GM12878 (cell line): ENCODE measurements at regions of chr2 and their contacts with region 1.

Region 1: GRCh38 chr2:135709992-135710391 is 31.7 kb upstream of the UBXN4 start:
- DNase-seq: no peak
- ATAC-seq: peak; percentile 89
- H3K4me3 ChIP-seq: no peak overlapping the region
- H3K27ac ChIP-seq: no peak overlapping the region
- H3K4me1 ChIP-seq: no peaks in the 10 kb centered on the region
- H3K27me3 ChIP-seq: no peaks in the 10 kb centered on the region
- CTCF ChIP-seq: peak; percentile 87 to 89 (median 89)
- EP300 ChIP-seq: no peak
- POLR2A ChIP-seq: no peak
- RAD21 ChIP-seq: peak; percentile 95

Region 2: DNA sequence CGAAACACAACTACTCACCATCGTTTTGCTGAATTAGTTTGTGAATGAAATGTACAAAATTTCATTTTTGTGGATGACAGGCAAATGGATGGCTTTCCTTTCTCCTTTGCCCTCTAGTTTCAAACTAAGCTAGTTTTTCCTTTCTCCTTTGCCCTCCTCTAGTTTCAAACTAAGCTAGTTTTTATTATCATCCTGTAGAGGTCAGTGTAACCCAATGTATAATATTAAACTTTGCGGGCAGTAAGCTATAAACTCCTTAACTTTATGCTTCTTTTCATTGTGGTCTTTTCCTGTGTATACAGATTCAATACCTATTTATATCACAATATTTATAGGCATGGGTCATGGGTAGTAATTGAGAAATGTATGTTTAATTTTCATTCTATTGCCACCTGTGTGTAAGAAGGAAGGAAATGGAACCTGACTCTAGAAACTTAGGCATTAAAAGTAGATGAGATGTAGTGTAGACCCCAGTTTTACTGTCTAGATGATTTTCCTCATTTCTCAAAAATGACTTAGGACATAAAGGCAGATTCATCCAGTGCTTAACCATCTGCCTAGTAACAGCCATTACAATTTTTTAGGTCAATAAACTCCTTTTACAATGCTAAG is 720.9 kb before region 1 on chr2:
- CTCF ChIA-PET with region 1: interaction called, 54 read pairs
- POLR2A ChIA-PET with region 1: no interaction called
- RAD21 ChIA-PET with region 1: interaction called, 15 read pairs
- SMC1A ChIA-PET with region 1: interaction called, 14 read pairs
- in situ Hi-C with region 1: no loop called
- intact Hi-C with region 1: loop called (anchors 5 kb)
- DNase-seq: no peak
- ATAC-seq: peak; percentile 75
- H3K4me3 ChIP-seq: no peak overlapping the region
- H3K27ac ChIP-seq: no peak overlapping the region
- H3K4me1 ChIP-seq: no peaks in the 10 kb centered on the region
- H3K27me3 ChIP-seq: no peaks in the 10 kb centered on the region
- CTCF ChIP-seq: peak; percentile 26 to 47 (median 32); a peak in 5 of 6 replicates
- EP300 ChIP-seq: no peak
- POLR2A ChIP-seq: no peak
- RAD21 ChIP-seq: peak; percentile 59

Region 3: GRCh38 chr2:135010200-135010942 is 699.6 kb before region 1 on chr2:
- CTCF ChIA-PET with region 1: interaction called, 124 read pairs
- POLR2A ChIA-PET with region 1: no interaction called
- RAD21 ChIA-PET with region 1: interaction called, 51 read pairs
- SMC1A ChIA-PET with region 1: interaction called, 41 read pairs
- in situ Hi-C with region 1: no loop called
- intact Hi-C with region 1: no loop called
- DNase-seq: no peak
- ATAC-seq: peak; percentile 35; the same call in 2 of the 3 replicates
- H3K4me3 ChIP-seq: no peak overlapping the region
- H3K27ac ChIP-seq: no peak overlapping the region
- H3K4me1 ChIP-seq: no peaks in the 10 kb centered on the region
- H3K27me3 ChIP-seq: peaks cover 0 to 2% of the 10 kb centered on the region in 2 experiments; a peak in 1 of 4 replicates
- CTCF ChIP-seq: no peak
- EP300 ChIP-seq: no peak
- POLR2A ChIP-seq: no peak
- RAD21 ChIP-seq: no peak

Region 4: GRCh38 chr2:135198481-135198880 is 511.5 kb before region 1 on chr2:
- CTCF ChIA-PET with region 1: no interaction called
- POLR2A ChIA-PET with region 1: no interaction called
- RAD21 ChIA-PET with region 1: no interaction called
- SMC1A ChIA-PET with region 1: no interaction called
- in situ Hi-C with region 1: no loop called
- intact Hi-C with region 1: loop called (anchors 10 kb)
- DNase-seq: no peak
- ATAC-seq: no peak
- H3K4me3 ChIP-seq: no peak overlapping the region
- H3K27ac ChIP-seq: no peak overlapping the region
- H3K4me1 ChIP-seq: no peaks in the 10 kb centered on the region
- H3K27me3 ChIP-seq: no peaks in the 10 kb centered on the region
- CTCF ChIP-seq: no peak
- EP300 ChIP-seq: no peak
- POLR2A ChIP-seq: no peak
- RAD21 ChIP-seq: no peak

Region 5: DNA sequence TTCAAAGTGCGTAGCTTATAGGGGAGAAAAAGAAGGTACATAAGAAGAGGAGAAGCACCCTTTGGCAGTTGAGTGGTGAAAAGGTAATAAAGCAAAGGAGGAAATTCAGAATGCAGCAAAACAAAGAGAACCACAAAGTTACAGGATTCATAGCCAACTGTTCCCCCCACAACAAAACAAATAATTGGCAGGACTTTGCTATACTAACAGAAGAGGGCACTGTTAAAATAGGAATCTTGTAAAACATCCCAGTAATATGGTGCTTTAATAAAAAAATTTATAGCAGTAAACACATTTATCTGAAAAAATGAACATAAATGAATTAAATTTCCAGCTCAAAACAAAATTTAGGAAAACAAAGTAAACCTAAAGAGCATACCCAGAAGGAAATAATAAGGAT is 136.4 kb before region 1 on chr2:
- CTCF ChIA-PET with region 1: interaction called, 9 read pairs
- POLR2A ChIA-PET with region 1: no interaction called
- RAD21 ChIA-PET with region 1: interaction called, 4 read pairs
- SMC1A ChIA-PET with region 1: interaction called, 8 read pairs
- in situ Hi-C with region 1: no loop called
- intact Hi-C with region 1: loop called (anchors 10 kb)
- DNase-seq: no peak
- ATAC-seq: no peak
- H3K4me3 ChIP-seq: no peak overlapping the region
- H3K27ac ChIP-seq: no peak overlapping the region
- H3K4me1 ChIP-seq: no peaks in the 10 kb centered on the region
- H3K27me3 ChIP-seq: no peaks in the 10 kb centered on the region
- CTCF ChIP-seq: no peak; a peak in 1 of 6 replicates
- EP300 ChIP-seq: no peak
- POLR2A ChIP-seq: no peak
- RAD21 ChIP-seq: no peak

Region 6: GRCh38 chr2:135657806-135658582 is 52.0 kb before region 1 on chr2:
- CTCF ChIA-PET with region 1: interaction called, 16 read pairs
- POLR2A ChIA-PET with region 1: interaction called, 4 read pairs
- RAD21 ChIA-PET with region 1: interaction called, 3 read pairs
- SMC1A ChIA-PET with region 1: interaction called, 9 read pairs
- in situ Hi-C with region 1: no loop called
- intact Hi-C with region 1: loop called (anchors 5 kb)
- DNase-seq: peak; percentile 38
- ATAC-seq: peak; percentile 96
- H3K4me3 ChIP-seq: peak overlapping the region; percentile 38; the same call in 1 of the 2 replicates
- H3K27ac ChIP-seq: peak overlapping the region; percentile 32
- H3K4me1 ChIP-seq: peaks cover 3% of the 10 kb centered on the region; the same call in 1 of the 2 replicates
- H3K27me3 ChIP-seq: no peaks in the 10 kb centered on the region
- CTCF ChIP-seq: no peak
- EP300 ChIP-seq: no peak
- POLR2A ChIP-seq: no peak
- RAD21 ChIP-seq: no peak